ENCODE measurements at regions of chrX and their contacts with region 1.

Region 1: DNA sequence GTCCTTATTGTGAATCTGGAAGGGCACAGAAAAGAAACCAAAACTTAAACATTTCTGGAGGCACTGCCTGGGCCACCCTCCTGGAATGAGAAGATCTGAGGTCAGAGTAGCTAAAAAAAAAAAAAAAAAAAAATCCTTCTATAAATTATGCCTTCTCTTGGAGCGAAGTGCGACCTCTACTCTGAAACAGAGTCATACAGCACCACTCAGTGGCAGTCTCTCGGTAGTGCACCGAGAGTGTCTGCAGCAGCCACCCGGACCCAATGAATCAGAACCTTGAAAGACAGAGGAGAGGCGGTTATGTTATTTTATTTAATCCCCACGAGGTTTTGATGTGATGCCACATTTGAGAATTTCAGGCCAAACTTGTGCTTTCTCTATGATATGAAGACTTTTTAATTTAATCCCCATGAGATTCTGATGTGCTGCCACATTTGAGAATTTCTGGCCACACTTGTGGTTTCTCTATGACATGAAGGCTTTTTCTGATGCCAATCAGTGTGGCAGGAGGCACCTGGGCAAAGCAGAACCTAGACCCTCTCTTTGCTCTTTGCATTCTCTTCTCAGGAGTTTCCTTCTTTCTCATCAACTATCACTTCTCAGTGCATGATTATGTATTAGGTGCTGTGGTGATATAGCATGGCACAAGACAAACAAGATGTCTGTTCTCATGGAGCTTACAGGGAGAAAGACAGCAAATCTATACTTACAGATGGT is 5.6 kb upstream of the CT47C1 start:
- DNase-seq: peak; percentile 52 to 80 (median 75)
- ATAC-seq: peak; percentile 67 to 71
- H3K4me3 ChIP-seq: no peak overlapping the region
- H3K27ac ChIP-seq: no peak overlapping the region
- H3K4me1 ChIP-seq: no peaks in the 10 kb centered on the region
- H3K27me3 ChIP-seq: no peaks in the 10 kb centered on the region

Region 2: GRCh38 chrX:118839334-118839958 is 227.7 kb before region 1 on chrX:
- intact Hi-C with region 1: loop called in 1 of 4 experiments (anchors 5 kb)
- DNase-seq: peak; percentile 85 to 93 (median 91)
- ATAC-seq: peak; percentile 95 to 96
- H3K4me3 ChIP-seq: peak overlapping the region; percentile 63
- H3K27ac ChIP-seq: no peak overlapping the region
- H3K4me1 ChIP-seq: no peaks in the 10 kb centered on the region
- H3K27me3 ChIP-seq: no peaks in the 10 kb centered on the region

Region 3: GRCh38 chrX:118847676-118848075 is 219.5 kb before region 1 on chrX:
- intact Hi-C with region 1: loop called in 3 of 4 experiments (anchors 5 kb)
- DNase-seq: no peak
- ATAC-seq: peak in 1 of 2 donors; percentile 59
- H3K4me3 ChIP-seq: no peak overlapping the region
- H3K27ac ChIP-seq: no peak overlapping the region
- H3K4me1 ChIP-seq: no peaks in the 10 kb centered on the region
- H3K27me3 ChIP-seq: no peaks in the 10 kb centered on the region

Measured in right cardiac atrium (tissue), 5 donors.